WTC11 (cell line): ENCODE measurements at regions of chr3 and their contacts with region 1.

Region 1: DNA sequence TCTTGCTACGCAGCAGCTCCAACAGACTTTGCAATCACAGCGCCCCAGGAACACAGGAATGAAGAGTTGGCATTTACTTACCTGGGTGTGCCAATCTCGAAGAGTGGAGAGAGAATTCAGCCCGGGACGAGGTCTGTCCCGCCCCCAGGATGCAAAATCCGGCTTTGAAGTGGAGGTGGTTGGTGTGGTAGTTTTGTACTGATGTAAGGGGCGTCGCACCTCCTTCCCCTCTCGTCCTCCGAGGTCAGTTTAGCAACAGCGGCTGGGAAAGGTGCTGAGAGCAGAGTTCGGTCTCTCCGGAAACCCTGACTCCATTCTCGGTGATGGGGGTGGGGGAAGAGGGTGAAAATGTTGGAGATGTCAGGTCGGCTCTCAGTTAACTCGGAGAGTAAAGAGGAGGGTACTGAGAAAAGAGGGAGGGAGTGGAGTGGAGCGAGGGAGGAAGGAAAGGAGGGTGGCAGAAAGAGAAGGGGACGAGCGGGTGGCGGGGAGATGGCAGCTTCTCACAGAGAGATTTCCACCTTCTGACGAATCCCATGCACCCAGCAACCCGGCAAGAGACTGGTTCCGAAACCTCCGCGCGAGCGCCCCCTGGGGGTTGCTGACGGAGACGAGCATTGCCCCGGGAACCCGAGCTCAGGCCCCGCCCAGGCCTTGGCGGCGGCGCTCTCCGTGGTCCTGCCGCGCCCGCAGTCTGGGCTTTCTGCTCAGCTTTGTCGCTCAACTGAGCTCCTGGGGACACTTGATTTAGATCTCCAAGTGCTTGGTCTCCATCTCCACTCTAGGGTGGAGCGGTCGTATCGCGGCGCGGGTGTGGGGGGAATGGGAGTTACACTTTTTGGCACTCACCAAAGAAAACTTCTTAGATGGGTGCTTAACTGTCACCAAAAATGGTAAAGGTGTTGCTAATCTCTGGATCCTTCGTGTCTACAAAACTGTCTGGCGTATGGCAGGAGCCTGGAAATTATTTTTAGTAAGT is at the start of gene CPNE4:
- DNase-seq: peak; percentile 97
- ATAC-seq: peak; percentile 89
- H3K4me3 Mint-ChIP-seq: peak within 1 kb of the TSS; percentile 94
- H3K27ac Mint-ChIP-seq: peak within 1 kb of the TSS; percentile 64
- H3K4me1 Mint-ChIP-seq: peaks cover 11% of the 10 kb centered on the region
- H3K27me3 Mint-ChIP-seq: peaks cover 42% of the 10 kb centered on the region
- CTCF ChIP-seq: peak; percentile 92
- total RNA-seq, gene CPNE4: 1.7 to 2.6 TPM (median 2.4 TPM) in 3 replicates

Region 2: DNA sequence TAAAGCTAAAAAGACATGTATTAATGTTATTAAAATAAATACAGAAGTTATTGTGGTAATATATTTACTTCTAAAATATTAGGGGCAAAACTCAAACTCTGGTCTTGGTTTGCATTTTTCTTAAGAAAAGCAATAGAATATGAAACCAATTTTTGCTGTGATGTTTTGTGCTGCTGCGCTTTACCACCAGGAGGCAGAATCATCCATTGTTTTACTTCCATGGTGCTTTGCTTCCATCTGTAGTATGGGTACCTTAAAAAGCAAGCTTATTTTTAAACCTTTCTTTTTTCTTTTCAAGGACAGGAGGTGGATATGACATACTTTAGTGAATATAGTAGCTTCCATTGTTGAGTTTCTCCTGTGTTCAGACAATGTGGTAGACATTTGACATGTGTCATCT is 485.4 kb before region 1 on chr3:
- CTCF ChIA-PET with region 1: interaction called, 17 read pairs
- POLR2A ChIA-PET with region 1: no interaction called
- DNase-seq: no peak
- ATAC-seq: no peak
- H3K4me3 Mint-ChIP-seq: no peak overlapping the region
- H3K27ac Mint-ChIP-seq: no peak overlapping the region
- H3K4me1 Mint-ChIP-seq: peaks cover 11% of the 10 kb centered on the region
- H3K27me3 Mint-ChIP-seq: no peaks in the 10 kb centered on the region
- CTCF ChIP-seq: peak; percentile 45; the same call in 1 of the 2 replicates

Region 3: GRCh38 chr3:131892331-131892730 is 142.4 kb before region 1 on chr3:
- CTCF ChIA-PET with region 1: interaction called, 13 read pairs
- POLR2A ChIA-PET with region 1: no interaction called
- DNase-seq: no peak
- ATAC-seq: no peak
- H3K4me3 Mint-ChIP-seq: no peak overlapping the region
- H3K27ac Mint-ChIP-seq: no peak overlapping the region
- H3K4me1 Mint-ChIP-seq: peaks cover 4% of the 10 kb centered on the region; the same call in 1 of the 2 replicates
- H3K27me3 Mint-ChIP-seq: no peaks in the 10 kb centered on the region
- CTCF ChIP-seq: no peak

Region 4: GRCh38 chr3:132006605-132007204 is 28.1 kb before region 1 on chr3:
- CTCF ChIA-PET with region 1: interaction called, 18 read pairs
- POLR2A ChIA-PET with region 1: no interaction called
- DNase-seq: peak; percentile 60
- ATAC-seq: peak; percentile 80
- H3K4me3 Mint-ChIP-seq: no peak overlapping the region
- H3K27ac Mint-ChIP-seq: no peak overlapping the region
- H3K4me1 Mint-ChIP-seq: peaks cover 35% of the 10 kb centered on the region
- H3K27me3 Mint-ChIP-seq: no peaks in the 10 kb centered on the region
- CTCF ChIP-seq: peak; percentile 54

Region 5: GRCh38 chr3:132161608-132162007 is 126.8 kb after region 1 on chr3:
- CTCF ChIA-PET with region 1: interaction called, 17 read pairs
- POLR2A ChIA-PET with region 1: no interaction called
- DNase-seq: peak; percentile 27
- ATAC-seq: peak; percentile 97
- H3K4me3 Mint-ChIP-seq: no peak overlapping the region
- H3K27ac Mint-ChIP-seq: no peak overlapping the region
- H3K4me1 Mint-ChIP-seq: no peaks in the 10 kb centered on the region; the same call in 1 of the 2 replicates
- H3K27me3 Mint-ChIP-seq: peaks cover 2% of the 10 kb centered on the region; the same call in 1 of the 2 replicates
- CTCF ChIP-seq: no peak

Region 6: DNA sequence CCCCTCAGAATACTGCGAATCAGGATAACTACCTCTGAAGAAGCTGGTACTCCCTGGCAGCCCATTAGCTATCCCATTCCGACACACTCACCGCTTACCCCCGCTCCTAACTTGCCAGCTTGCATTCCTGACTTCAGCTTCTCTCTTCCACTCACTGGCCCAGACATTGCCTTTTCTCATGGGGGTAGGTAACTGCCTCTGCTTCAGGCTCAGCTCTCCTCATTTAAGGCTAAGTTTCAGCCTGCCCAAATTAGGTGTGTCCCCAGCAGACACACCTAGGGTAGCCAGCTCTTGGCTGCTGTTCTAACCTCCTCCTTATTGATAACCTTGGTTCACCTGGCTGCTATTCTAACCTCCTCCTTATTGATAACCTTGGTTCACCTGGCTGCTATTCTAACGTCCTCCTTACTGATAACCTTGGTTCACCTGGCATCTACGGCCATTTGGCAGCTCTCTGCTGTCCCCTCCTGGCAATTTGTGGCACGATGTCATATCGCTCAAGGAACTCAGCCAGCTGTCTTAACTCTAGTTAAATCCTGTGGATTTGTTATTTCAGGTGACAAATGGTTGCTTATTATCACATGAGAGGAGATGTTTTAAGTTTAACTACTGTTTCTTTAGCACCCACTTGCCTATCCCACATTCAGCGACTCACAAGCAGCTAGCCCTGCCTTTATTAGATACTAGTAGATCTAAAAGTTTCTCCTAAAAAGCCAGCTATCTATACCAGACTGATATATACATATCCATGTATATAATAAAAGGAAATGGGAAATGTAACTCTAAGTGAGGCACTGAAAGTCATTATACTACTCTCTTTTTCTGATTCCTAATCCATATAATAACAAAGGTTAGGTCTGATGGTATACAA is 175.9 kb after region 1 on chr3:
- CTCF ChIA-PET with region 1: interaction called, 38 read pairs
- POLR2A ChIA-PET with region 1: no interaction called
- DNase-seq: peak; percentile 77
- ATAC-seq: peak; percentile 95
- H3K4me3 Mint-ChIP-seq: no peak overlapping the region
- H3K27ac Mint-ChIP-seq: no peak overlapping the region
- H3K4me1 Mint-ChIP-seq: peaks cover 18% of the 10 kb centered on the region
- H3K27me3 Mint-ChIP-seq: peaks cover 60% of the 10 kb centered on the region
- CTCF ChIP-seq: peak; percentile 67

Region 7: GRCh38 chr3:132788301-132788671 is 753.5 kb after region 1 on chr3:
- CTCF ChIA-PET with region 1: no interaction called
- POLR2A ChIA-PET with region 1: no interaction called
- DNase-seq: no peak
- ATAC-seq: no peak
- H3K4me3 Mint-ChIP-seq: no peak overlapping the region
- H3K27ac Mint-ChIP-seq: no peak overlapping the region
- H3K4me1 Mint-ChIP-seq: peaks cover 5% of the 10 kb centered on the region
- H3K27me3 Mint-ChIP-seq: no peaks in the 10 kb centered on the region
- CTCF ChIP-seq: no peak